CD14-positive monocyte (primary cell): ENCODE measurements at regions of chr22 and their contacts with region 1.

Region 1: DNA sequence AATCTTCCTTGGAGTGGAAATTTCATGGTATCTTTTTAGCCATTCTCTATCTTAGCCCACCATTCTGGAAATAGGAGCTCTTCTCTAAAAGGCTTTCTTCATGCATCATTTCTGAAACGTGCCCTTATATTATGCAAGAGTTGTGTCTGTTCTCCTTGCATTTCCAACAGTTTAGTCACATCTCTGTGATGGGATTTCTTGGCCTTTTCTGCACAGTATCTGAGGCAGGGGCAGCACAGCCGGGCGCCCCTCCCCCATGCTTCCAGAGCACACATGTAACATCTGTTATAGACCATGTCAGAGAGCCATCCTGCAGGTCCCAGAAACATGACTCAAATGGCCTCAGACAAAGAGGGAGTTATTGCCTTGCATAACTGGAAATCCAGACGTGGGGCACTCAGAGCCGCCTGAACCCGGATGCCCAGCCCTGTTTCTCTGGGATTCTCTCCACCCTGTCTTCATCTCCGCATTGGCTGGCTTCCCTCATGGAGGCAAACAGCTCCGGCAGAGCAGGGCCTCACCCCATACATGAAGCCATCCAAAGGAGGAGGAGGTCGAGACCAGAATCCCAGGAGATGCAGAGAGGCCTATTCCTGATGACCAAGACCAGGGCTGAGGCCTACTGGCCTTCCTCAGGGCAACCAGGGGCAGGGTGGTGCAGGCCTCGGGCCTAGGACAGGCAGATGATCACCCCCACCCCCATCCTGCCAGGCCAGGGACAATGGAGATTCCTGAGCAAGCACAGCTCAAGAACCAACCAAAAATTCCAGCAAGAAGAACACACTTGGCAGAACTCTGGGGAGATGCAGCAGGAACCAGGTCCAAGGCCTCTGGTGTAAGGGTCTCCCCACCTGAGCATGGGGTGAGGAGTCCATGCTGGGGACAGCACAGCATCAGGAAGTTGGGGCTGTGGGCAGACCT is 61.3 kb downstream of the IGLL5 start:
- DNase-seq: peak in 2 of 3 donors; percentile 21 to 41
- H3K4me3 ChIP-seq: no peak overlapping the region
- H3K4me3 Mint-ChIP-seq: no peak overlapping the region
- H3K27ac ChIP-seq: no peak overlapping the region
- H3K27ac Mint-ChIP-seq: peak overlapping the region in 2 of 7 donors; percentile 94 to 99
- H3K4me1 ChIP-seq: peaks cover 67 to 75% of the 10 kb centered on the region in 2 donors
- H3K4me1 Mint-ChIP-seq: peaks cover 66% of the 10 kb centered on the region
- H3K27me3 ChIP-seq: no peaks in the 10 kb centered on the region
- H3K27me3 Mint-ChIP-seq: peaks cover 0 to 3% (median 2%) of the 10 kb centered on the region in 3 donors
- CTCF ChIP-seq: no peak

Region 2: DNA sequence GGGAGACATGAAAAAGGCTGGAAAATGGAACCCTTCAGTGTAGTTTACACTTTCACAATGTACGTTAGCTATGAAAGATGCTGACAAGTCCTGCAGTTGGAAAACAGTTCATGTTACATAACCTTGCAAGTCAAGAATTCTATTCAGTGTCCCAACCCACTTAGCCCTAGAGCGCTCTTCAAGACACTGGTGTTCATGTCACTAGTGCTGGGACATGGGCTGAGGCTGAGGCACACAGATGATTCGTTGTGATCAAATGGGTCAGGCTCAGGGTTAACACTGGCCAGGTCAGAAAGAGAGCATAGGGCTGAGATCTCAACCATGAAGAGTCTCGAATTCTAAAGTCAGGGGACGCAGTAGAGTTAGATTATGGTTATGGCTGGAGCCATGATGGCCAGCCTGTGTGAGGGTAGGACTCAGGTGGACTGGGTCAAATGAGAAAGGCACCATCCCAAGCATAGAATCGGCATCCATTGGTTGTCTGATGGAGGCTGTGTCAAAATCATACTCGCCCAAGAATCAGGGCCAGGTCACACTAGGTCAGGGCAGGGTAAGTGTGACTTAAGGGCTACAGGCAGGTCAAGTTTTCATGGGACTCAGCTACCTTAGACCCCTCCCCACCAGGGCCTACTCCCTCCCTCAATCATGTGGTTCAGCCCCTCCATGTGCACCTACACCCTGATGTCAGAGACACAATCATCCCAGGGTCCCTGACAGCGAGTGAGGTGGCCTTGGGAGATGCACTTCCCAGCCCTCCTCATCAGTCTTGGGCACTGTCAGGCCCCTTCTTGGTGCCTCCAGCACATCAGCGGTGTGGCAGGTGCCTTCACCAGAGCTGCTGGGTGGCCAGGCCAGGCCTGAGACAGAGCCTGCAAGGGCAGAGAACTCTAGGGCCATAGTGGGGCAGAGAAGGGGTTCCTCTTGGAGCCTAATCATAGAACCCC is 41.1 kb before region 1 on chr22:
- intact Hi-C with region 1: loop called in 1 of 2 experiments (anchors 5 kb)
- DNase-seq: no peak
- H3K4me3 ChIP-seq: no peak overlapping the region
- H3K4me3 Mint-ChIP-seq: no peak overlapping the region
- H3K27ac ChIP-seq: no peak overlapping the region
- H3K27ac Mint-ChIP-seq: peak overlapping the region in 1 of 7 donors; percentile 31
- H3K4me1 ChIP-seq: peaks cover 2 to 13% of the 10 kb centered on the region in 2 donors
- H3K4me1 Mint-ChIP-seq: peaks cover 26% of the 10 kb centered on the region
- H3K27me3 ChIP-seq: no peaks in the 10 kb centered on the region
- H3K27me3 Mint-ChIP-seq: peaks cover 2 to 10% (median 3%) of the 10 kb centered on the region in 3 donors
- CTCF ChIP-seq: no peak

Region 3: GRCh38 chr22:23457355-23458068 is 508.6 kb after region 1 on chr22:
- intact Hi-C with region 1: no loop called
- DNase-seq: no peak
- H3K4me3 ChIP-seq: no peak overlapping the region
- H3K4me3 Mint-ChIP-seq: peak overlapping the region in 1 of 2 donors; percentile 76
- H3K27ac ChIP-seq: no peak overlapping the region
- H3K27ac Mint-ChIP-seq: no peak overlapping the region
- H3K4me1 ChIP-seq: peaks cover 4 to 9% of the 10 kb centered on the region in 2 donors
- H3K4me1 Mint-ChIP-seq: peaks cover 13% of the 10 kb centered on the region
- H3K27me3 ChIP-seq: peaks cover 0 to 12% of the 10 kb centered on the region in 2 donors
- H3K27me3 Mint-ChIP-seq: peaks cover 20 to 34% (median 23%) of the 10 kb centered on the region in 3 donors
- CTCF ChIP-seq: no peak